Heart right ventricle (tissue), 16 donors: ENCODE measurements at regions of chr22 and their contacts with region 1.

Region 1: DNA sequence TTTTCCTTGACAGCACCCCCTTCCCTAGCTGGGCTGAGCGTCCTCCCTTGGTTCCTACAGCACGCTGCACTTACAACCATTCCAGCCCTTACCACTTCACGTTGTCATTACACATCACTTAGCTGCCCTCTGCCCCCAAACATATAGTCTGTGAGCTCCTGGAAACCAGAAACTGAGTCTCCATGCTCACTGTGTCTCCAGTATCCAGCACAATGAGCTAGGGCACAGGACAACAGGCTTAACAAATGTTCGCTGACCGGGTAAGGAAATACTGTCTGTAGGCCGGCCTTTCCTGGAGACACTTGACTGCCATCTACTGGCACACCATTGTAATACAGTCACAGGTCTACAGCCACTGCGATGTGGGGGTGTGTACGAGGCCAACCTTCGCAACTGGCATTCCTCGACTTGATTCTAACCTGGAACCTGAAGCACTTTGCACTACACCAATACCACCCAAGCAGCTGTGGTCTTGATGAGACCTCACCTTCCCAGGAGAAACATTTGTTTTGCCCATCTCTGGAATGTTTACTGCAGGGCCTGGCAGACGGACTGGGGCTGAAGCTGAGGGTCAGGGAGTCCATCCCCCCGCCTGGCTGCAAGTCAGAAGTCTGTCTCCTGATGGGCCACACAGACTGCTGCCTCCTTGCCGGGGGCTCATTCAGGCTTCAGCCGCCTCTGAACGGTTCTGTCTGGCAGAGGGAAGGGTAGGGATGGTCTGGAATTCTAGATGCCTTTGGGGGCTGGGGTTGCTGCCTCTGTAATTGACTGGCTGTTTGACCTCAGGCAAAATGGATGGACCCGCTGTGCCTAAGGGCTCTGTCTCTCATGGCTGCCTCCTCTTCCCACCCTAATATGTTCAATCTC is 72.0 kb downstream of the SYN3 start:
- DNase-seq: peak in 1 of 2 donors; percentile 86
- ATAC-seq: peak; percentile 94 to 98 (median 97)
- H3K4me3 ChIP-seq: no peak overlapping the region
- H3K27ac ChIP-seq: no peak overlapping the region
- H3K4me1 ChIP-seq: peaks cover 0 to 11% (median 8%) of the 10 kb centered on the region in 9 donors
- H3K27me3 ChIP-seq: no peaks in the 10 kb centered on the region
- CTCF ChIP-seq: peak; percentile 83 to 95 (median 91)

Region 2: DNA sequence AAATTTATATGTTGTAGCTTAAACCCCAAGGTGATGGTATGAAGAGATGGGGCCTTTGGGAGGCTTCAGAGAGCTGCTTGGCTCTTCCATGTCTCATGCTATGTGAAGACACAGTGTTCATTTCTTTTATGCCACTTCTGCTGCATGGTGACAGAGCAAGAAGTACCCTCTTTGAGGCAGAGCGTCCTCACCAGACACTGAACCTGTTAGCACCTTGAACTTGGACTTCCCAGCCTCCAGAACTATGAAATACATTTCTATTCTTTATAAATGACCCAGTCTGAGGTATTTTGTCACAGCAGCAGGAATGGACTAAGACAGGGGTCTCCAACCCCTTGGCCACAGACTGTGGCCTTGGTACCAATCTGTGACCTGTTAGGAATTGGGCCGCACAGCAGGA is 331.1 kb before region 1 on chr22:
- intact Hi-C with region 1: loop called in 7 of 10 experiments (anchors 1 to 5 kb)
- DNase-seq: no peak
- ATAC-seq: no peak
- H3K4me3 ChIP-seq: no peak overlapping the region
- H3K27ac ChIP-seq: no peak overlapping the region
- H3K4me1 ChIP-seq: peaks cover 0 to 7% (median 1%) of the 10 kb centered on the region in 9 donors
- H3K27me3 ChIP-seq: no peaks in the 10 kb centered on the region
- CTCF ChIP-seq: no peak

Region 3: GRCh38 chr22:32796865-32797573 is 189.1 kb before region 1 on chr22:
- intact Hi-C with region 1: loop called in 8 of 10 experiments (anchors 2 to 10 kb)
- DNase-seq: peak; percentile 74 to 80
- ATAC-seq: peak; percentile 57 to 79 (median 70)
- H3K4me3 ChIP-seq: no peak overlapping the region
- H3K27ac ChIP-seq: peak overlapping the region in 6 of 10 donors; percentile 13 to 54 (median 37)
- H3K4me1 ChIP-seq: peaks cover 2 to 43% (median 22%) of the 10 kb centered on the region in 9 donors
- H3K27me3 ChIP-seq: peaks cover 0 to 18% (median 0%) of the 10 kb centered on the region in 7 donors
- CTCF ChIP-seq: peak; percentile 82 to 95 (median 92)

Region 4: GRCh38 chr22:32836280-32837123 is 149.6 kb before region 1 on chr22:
- intact Hi-C with region 1: loop called in 1 of 10 experiments (anchors 10 kb)
- DNase-seq: no peak
- ATAC-seq: no peak
- H3K4me3 ChIP-seq: no peak overlapping the region
- H3K27ac ChIP-seq: peak overlapping the region in 5 of 10 donors; percentile 1 to 86 (median 42)
- H3K4me1 ChIP-seq: peaks cover 58 to 100% (median 96%) of the 10 kb centered on the region in 9 donors
- H3K27me3 ChIP-seq: no peaks in the 10 kb centered on the region
- CTCF ChIP-seq: peak; percentile 30 to 64 (median 48)

Region 5: GRCh38 chr22:32897400-32897799 is 88.7 kb before region 1 on chr22:
- intact Hi-C with region 1: no loop called
- DNase-seq: no peak
- ATAC-seq: no peak
- H3K4me3 ChIP-seq: no peak overlapping the region
- H3K27ac ChIP-seq: no peak overlapping the region
- H3K4me1 ChIP-seq: no peaks in the 10 kb centered on the region
- H3K27me3 ChIP-seq: no peaks in the 10 kb centered on the region
- CTCF ChIP-seq: no peak

Region 6: GRCh38 chr22:32920032-32920628 is 66.0 kb before region 1 on chr22:
- intact Hi-C with region 1: loop called in 3 of 10 experiments (anchors 5 to 10 kb)
- DNase-seq: peak; percentile 40 to 60
- ATAC-seq: peak; percentile 67 to 87 (median 78)
- H3K4me3 ChIP-seq: peak overlapping the region in 1 of 10 donors; percentile 9
- H3K27ac ChIP-seq: peak overlapping the region in 3 of 10 donors; percentile 2 to 8 (median 7)
- H3K4me1 ChIP-seq: peaks cover 7 to 29% (median 17%) of the 10 kb centered on the region in 9 donors
- H3K27me3 ChIP-seq: no peaks in the 10 kb centered on the region
- CTCF ChIP-seq: no peak

Region 7: DNA sequence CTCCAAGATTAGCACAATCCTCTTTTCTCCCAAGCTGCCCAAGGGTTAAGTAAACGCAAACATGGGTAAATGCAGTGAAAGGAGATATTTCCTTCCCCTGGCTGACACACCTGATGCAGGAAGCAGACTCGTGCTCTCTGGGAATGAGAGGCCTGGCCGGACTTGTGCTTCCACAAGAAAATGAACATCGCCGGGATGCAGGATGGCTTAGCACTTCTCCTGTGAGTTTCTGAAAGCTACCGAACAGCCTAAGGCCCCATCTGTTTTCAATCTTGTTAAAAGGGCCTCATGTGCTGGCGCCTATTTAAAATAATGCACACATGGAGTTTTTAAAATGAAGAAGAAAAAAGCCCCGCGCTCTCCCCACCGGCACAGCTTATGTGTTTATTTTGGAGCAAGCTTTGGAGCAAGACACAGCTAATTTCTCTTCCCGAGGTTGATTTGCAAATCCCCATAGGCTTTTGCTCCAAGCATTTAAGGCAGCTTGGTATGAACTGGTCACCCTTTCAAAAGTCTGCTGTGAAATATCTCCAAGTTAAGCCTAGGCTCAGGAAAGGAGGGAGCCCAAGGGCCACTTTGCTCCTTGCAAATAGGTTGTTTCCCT is 28.8 kb before region 1 on chr22:
- intact Hi-C with region 1: loop called in 1 of 10 experiments (anchors 2 kb)
- DNase-seq: no peak
- ATAC-seq: peak in 5 of 8 donors; percentile 25 to 65 (median 28)
- H3K4me3 ChIP-seq: no peak overlapping the region
- H3K27ac ChIP-seq: peak overlapping the region in 5 of 10 donors; percentile 16 to 41 (median 19)
- H3K4me1 ChIP-seq: peaks cover 3 to 28% (median 22%) of the 10 kb centered on the region in 9 donors
- H3K27me3 ChIP-seq: no peaks in the 10 kb centered on the region
- CTCF ChIP-seq: no peak